ENCODE measurements at regions of chr11 and their contacts with region 1.

Region 1: DNA sequence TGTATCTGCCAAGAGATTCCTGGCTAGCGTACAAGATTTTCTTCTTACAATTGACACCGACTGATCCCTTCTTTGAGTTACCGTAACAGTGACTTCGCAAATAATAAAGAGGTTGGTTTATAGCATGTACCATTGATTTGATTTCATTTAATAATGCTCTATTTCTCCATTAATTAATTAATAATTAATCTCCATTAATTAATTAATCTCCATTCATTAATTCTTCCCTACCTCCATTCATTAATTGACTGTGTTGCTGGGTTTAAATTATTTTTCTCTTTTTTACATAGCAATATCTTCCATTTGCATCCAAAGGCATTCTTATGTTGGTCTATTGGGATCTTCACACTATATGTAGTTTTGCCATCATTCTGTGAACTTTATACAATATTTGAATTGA is 21.0 kb downstream of the OR5AS1 start:
- DNase-seq: no peak
- H3K4me3 ChIP-seq: no peak overlapping the region
- H3K27ac ChIP-seq: no peak overlapping the region
- H3K4me1 ChIP-seq: no peaks in the 10 kb centered on the region
- H3K27me3 ChIP-seq: no peaks in the 10 kb centered on the region
- CTCF ChIP-seq: no peak

Region 2: DNA sequence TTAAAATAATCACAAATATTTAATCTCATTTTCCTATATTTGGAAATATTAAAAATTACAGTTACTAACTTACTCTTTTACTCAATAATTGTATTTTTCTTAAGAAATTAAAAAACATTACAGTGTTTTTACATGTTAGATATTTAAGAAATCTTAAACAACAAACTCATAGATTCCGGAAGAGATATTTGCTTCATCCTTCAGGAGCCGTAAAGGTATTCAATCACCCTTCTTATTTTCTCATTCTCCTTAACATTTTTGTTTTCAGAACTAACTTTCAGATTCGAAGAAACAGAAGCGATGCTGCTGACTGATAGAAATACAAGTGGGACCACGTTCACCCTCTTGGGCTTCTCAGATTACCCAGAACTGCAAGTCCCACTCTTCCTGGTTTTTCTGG is 229.2 kb before region 1 on chr11 and contains the start of gene OR5D18:
- CTCF ChIA-PET with region 1: no interaction called
- POLR2A ChIA-PET with region 1: no interaction called
- intact Hi-C with region 1: no loop called
- DNase-seq: no peak
- H3K4me3 ChIP-seq: no peak within 1 kb of the TSS
- H3K27ac ChIP-seq: no peak within 1 kb of the TSS
- H3K4me1 ChIP-seq: no peaks in the 10 kb centered on the region
- H3K27me3 ChIP-seq: no peaks in the 10 kb centered on the region
- CTCF ChIP-seq: no peak
- total RNA-seq, gene OR5D18: not detected in 2 replicates

Region 3: DNA sequence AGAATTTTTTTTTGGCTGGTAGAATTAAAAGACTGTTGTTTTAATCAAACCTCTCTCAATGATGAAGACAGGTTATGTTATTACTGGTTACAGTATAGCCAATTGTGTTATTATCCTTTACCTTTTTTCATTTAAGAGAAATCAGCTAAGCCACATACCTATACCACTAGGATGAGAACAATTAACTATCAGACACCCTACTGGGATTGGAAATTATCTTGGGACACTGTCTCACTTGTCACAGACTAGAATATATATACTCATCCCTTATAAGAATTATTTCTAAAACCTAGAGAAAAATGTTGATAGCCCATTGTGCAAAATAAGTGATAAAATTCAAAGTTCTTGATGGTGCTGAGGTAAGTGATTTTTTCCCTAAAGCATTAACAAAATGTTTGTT is 21.1 kb before region 1 on chr11 and contains the start of gene OR5AS1:
- CTCF ChIA-PET with region 1: no interaction called
- POLR2A ChIA-PET with region 1: no interaction called
- intact Hi-C with region 1: loop called (anchors 1 kb)
- DNase-seq: no peak
- H3K4me3 ChIP-seq: no peak within 1 kb of the TSS
- H3K27ac ChIP-seq: no peak within 1 kb of the TSS
- H3K4me1 ChIP-seq: no peaks in the 10 kb centered on the region
- H3K27me3 ChIP-seq: no peaks in the 10 kb centered on the region
- CTCF ChIP-seq: no peak
- total RNA-seq, gene OR5AS1: not detected in 2 replicates

Measured in A673 (cell line).